Cardiac septum (tissue), 1 donor: ENCODE measurements at regions of chr4 and their contacts with region 1.

Region 1: GRCh38 chr4:123564758-123565346 is 168.3 kb downstream of the SPRY1 start:
- DNase-seq: no peak

Region 2: DNA sequence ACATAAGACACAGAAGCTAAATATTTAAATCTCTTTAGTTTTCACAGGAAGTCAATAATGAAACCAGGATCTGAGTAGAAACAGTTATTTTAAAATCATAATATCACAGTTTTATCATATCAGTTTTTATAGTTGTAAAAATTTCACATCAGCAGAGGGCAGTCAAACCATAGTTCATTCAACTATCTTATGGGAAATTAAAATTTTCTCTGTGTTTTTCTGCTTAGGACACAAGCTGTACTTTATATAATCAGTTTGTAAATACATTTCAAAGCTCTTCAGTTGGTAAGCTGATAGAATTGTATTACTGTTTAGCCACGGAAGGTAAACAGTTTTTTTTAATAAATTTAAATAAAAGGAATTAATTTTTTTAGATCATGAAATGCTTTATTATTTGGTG is 437.6 kb before region 1 on chr4:
- intact Hi-C with region 1: loop called (anchors 10 kb)
- DNase-seq: no peak

Region 3: GRCh38 chr4:123599920-123600810 is 35.3 kb after region 1 on chr4:
- intact Hi-C with region 1: no loop called
- DNase-seq: peak; percentile 80

Region 4: GRCh38 chr4:123649645-123650391 is 85.0 kb after region 1 on chr4:
- intact Hi-C with region 1: loop called (anchors 10 kb)
- DNase-seq: no peak